OCI-LY7 (cell line): ENCODE measurements at regions of chr15 and their contacts with region 1.

Region 1: DNA sequence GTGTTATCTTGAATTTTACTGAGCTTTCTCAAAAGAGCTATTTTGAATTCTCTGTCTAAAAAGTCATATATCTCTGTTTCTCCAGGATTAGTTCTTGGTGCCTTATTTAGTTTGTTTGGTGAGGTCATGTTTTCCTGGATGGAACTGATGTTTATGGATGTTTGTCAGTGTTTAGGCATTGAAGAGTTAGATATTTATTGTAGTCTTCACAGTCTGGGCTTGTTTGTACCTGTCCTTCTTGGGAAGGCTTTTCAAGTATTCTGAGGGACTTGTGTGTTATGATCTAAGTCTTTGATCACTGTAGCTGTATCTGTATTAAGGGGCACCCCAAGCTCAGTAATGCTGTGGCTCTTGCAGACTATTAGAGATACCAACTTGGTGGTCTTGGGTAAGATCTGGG is 10.6 kb upstream of the RAD51 start:
- DNase-seq: no peak
- H3K4me3 ChIP-seq: no peak overlapping the region
- H3K27ac ChIP-seq: no peak overlapping the region
- H3K4me1 ChIP-seq: peaks cover 16% of the 10 kb centered on the region
- CTCF ChIP-seq: no peak

Region 2: GRCh38 chr15:40660686-40661085 is 23.7 kb before region 1 on chr15:
- CTCF ChIA-PET with region 1: no interaction called
- POLR2A ChIA-PET with region 1: no interaction called
- intact Hi-C with region 1: no loop called
- DNase-seq: no peak
- H3K4me3 ChIP-seq: no peak overlapping the region
- H3K27ac ChIP-seq: no peak overlapping the region
- H3K4me1 ChIP-seq: no peaks in the 10 kb centered on the region
- CTCF ChIP-seq: no peak

Region 3: DNA sequence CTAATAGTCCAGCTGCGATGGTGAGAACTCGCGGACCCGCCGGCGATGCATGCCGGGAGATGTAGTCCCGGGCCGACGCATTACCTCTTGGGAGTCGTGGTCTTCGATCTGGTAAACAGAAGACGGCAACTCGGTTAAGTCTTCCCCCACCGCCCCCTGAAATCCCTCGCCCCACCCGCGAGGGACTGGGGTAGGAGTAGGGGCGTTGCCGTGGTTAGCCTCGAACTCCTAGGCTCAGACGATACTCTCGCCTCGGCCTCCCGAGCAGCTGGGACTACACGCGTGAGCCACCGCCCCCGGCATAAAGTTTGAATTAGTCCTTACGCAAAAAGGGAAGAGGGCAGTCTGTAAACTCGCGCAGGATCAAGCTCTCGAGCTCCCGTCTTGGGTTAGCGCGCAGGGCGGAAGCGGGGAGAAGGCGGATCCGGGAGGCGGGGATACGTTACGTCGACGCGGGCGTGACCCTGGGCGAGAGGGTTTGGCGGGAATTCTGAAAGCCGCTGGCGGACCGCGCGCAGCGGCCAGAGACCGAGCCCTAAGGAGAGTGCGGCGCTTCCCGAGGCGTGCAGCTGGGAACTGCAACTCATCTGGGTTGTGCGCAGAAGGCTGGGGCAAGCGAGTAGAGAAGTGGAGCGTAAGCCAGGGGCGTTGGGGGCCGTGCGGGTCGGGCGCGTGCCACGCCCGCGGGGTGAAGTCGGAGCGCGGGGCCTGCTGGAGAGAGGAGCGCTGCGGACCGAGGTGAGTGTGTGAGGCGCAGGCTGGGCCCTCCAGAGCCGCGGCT is 10.5 kb after region 1 on chr15 and contains the start of gene RAD51:
- CTCF ChIA-PET with region 1: no interaction called
- POLR2A ChIA-PET with region 1: interaction called, 14 read pairs
- intact Hi-C with region 1: no loop called
- DNase-seq: peak; percentile 96
- H3K4me3 ChIP-seq: peak within 1 kb of the TSS; percentile 94
- H3K27ac ChIP-seq: peak within 1 kb of the TSS; percentile 89
- H3K4me1 ChIP-seq: peaks cover 26% of the 10 kb centered on the region
- CTCF ChIP-seq: no peak
- total RNA-seq, gene RAD51: 45.8 and 61.9 TPM in 2 replicates

Region 4: DNA sequence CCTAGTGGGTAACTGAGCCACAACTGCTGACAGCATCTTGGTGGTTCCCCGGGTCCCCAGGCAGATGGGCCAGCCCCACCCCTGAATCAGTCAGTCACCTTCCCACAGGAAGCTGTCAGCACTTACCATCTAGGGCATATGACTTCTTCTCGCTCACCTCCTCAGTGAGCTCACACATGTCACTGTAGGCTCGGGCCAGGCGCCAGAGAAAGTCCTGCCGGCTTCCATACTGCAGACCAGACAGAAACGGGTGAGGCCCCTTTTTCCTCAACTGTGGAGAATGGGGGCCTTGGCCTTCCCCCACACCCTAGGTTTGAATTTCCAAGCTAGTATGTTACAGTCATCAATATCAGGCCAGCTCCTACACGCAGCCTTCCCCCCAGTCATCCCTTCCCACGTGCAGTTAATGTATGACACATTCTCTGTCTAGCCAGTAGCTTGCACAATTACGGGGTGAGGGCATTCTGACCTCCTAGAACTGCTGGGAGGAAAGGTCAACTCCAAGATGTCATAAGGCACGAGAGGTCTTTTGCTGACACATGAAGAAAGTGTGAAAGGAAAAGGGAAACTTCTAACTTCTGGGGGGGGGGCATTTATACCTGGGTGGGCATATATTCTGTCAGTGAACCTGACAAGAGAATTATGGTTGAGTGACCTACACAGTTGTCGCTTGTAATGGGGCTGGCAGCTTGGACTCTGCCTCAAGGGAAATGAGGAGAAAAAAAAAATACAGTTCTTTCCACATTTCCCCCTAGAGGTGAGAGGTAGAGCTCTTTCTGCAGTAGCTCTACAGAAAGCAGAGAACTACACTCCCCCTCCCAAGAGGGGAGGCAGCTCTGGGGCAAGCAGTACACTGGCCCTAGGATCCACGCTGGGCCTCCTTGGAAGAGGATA is 59.8 kb after region 1 on chr15:
- CTCF ChIA-PET with region 1: no interaction called
- POLR2A ChIA-PET with region 1: no interaction called
- intact Hi-C with region 1: loop called (anchors 5 kb)
- DNase-seq: no peak
- H3K4me3 ChIP-seq: no peak overlapping the region
- H3K27ac ChIP-seq: no peak overlapping the region
- H3K4me1 ChIP-seq: peaks cover 4% of the 10 kb centered on the region
- CTCF ChIP-seq: 0 out of 2 replicates have a peak, but pooled peaks have one; percentile 15